IMR-90 (cell line): ENCODE measurements at regions of chr6 and their contacts with region 1.

Region 1: GRCh38 chr6:40194447-40195170 is 260.3 kb upstream of the MOCS1 start:
- DNase-seq: no peak
- ATAC-seq: no peak
- H3K4me3 ChIP-seq: no peak overlapping the region
- H3K27ac ChIP-seq: no peak overlapping the region
- H3K4me1 ChIP-seq: no peaks in the 10 kb centered on the region
- H3K27me3 ChIP-seq: no peaks in the 10 kb centered on the region
- CTCF ChIP-seq: no peak
- POLR2A ChIP-seq: no peak
- RAD21 ChIP-seq: no peak

Region 2: DNA sequence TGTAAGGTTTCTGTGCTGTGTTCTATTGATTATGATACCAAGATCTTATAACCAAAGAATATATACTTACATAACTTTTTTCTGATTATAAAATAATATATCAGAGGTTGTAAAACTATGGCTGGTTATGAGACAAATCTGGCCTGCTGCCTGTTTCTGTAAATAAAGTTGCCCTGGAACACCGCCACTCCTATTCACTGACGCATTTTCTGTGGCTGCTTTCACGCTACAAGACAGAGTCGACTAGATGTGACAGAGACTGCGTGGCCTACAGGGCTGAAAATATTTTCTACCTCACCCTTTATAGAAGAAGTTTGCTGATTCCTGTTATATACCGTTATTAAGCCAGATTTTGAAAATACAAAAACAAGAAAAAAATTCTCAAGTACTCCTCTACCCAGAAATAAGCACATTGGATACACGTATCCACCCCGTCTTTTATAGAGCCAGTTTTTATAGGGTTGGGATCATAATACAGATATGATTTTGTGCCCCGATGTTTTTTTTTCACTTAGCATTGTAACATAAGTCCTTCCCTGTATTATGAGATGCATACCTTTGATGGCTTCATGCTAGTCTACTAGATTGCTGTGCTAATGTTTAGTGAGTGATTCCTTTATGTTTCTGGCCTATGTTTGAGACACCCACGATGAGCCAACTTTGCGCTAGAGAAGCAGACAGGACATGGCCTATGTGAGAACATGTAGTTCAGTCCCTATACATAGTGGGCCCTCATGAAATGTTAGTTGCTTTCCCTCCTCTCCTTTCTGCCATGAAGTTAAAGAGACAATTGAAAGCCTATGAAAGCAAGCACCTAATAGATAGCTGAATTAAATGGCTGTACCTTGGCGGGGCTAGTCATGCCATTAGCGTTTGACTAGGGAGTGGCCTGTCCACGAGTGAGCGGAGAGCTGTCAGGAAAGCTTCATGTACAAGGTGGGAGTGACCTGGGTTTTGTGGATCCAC is 774.0 kb before region 1 on chr6:
- CTCF ChIA-PET with region 1: no interaction called
- POLR2A ChIA-PET with region 1: no interaction called
- dilution Hi-C with region 1: no loop called
- in situ Hi-C with region 1: no loop called
- intact Hi-C with region 1: loop called (anchors 5 kb)
- DNase-seq: peak; percentile 2
- ATAC-seq: no peak
- H3K4me3 ChIP-seq: no peak overlapping the region
- H3K27ac ChIP-seq: no peak overlapping the region
- H3K4me1 ChIP-seq: no peaks in the 10 kb centered on the region
- H3K27me3 ChIP-seq: no peaks in the 10 kb centered on the region
- CTCF ChIP-seq: no peak
- POLR2A ChIP-seq: no peak
- RAD21 ChIP-seq: no peak